Vagina (tissue), 2 donors: ENCODE measurements at regions of chr17 and their contacts with region 1.

Region 1: GRCh38 chr17:79315358-79316105 is 240.9 kb downstream of the ENGASE start:
- DNase-seq: no peak
- H3K4me3 ChIP-seq: no peak overlapping the region
- H3K27ac ChIP-seq: no peak overlapping the region
- H3K4me1 ChIP-seq: no peaks in the 10 kb centered on the region
- H3K27me3 ChIP-seq: no peaks in the 10 kb centered on the region
- CTCF ChIP-seq: no peak
- POLR2A ChIP-seq: no peak

Region 2: GRCh38 chr17:79237448-79238053 is 78.0 kb before region 1 on chr17:
- intact Hi-C with region 1: loop called (anchors 5 kb)
- DNase-seq: no peak
- H3K4me3 ChIP-seq: no peak overlapping the region
- H3K27ac ChIP-seq: no peak overlapping the region
- H3K4me1 ChIP-seq: no peaks in the 10 kb centered on the region
- H3K27me3 ChIP-seq: no peaks in the 10 kb centered on the region
- CTCF ChIP-seq: no peak
- POLR2A ChIP-seq: no peak

Region 3: DNA sequence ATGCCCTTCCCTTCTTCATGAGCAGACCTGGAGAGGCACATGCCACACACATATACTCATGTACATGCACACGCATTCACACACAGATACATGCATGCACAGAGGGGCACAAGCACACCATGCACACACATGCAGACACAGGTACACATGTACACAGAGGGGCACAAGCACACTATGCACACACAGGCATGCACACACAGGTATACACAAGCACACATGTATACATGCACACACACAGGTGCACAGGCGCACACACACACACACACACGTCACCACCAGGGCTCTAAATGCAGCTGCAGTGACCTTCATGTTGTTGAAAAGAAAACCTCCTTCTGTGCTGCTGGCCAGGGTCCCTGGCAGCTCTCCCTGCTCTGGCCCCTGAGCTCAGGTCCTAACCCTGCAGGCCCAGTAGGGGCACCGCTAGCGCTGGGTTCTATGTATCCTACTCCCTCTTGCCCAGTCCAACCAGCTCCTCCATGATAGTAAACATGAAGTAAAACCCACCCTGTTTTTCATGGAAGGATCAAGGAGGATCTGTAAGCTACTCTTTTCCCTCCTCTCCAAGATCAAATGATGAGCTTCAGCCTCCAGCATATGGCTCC is 122.4 kb after region 1 on chr17:
- intact Hi-C with region 1: no loop called
- DNase-seq: no peak
- H3K4me3 ChIP-seq: no peak overlapping the region
- H3K27ac ChIP-seq: no peak overlapping the region
- H3K4me1 ChIP-seq: no peaks in the 10 kb centered on the region
- H3K27me3 ChIP-seq: no peaks in the 10 kb centered on the region
- CTCF ChIP-seq: no peak
- POLR2A ChIP-seq: no peak